ENCODE measurements at regions of chr4 and their contacts with region 1.

Region 1: DNA sequence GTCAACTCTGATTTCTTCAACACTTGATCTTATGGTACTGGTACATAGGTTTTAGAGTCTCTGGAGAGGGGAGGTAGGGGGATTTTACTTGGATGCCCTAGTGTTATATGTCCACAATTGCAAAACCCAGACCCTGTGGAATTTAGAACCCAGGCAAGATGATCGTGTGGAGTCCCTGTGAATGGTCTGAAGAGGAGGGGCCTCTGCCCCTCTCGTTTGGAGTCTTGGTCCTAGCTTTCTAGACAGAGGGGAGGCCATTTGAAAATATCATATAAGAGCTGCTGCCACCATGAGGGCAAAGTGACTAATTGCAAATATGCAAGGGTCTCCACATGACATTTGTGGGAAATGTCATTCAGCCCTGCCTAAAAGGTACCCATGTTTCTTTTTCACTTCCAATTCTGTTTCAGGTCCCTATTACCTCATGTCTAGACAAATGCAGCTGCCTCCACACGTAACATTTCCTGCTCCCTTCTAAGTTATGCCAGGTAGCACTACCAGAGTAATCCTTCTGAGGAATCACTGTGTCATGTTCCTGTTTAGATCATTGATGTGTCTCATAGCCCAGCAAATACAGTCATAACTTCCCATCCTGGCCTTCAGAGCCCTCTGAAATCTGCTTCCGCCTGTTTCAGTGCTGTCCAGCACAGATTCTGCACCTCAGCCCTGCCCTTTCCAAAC is 126.8 kb downstream of the KLHL8 start:
- DNase-seq: peak; percentile 65

Region 2: GRCh38 chr4:86921608-86922252 is 171.9 kb before region 1 on chr4:
- CTCF ChIA-PET with region 1: interaction called, 31 read pairs
- POLR2A ChIA-PET with region 1: interaction called, 3 read pairs
- DNase-seq: no peak

Region 3: DNA sequence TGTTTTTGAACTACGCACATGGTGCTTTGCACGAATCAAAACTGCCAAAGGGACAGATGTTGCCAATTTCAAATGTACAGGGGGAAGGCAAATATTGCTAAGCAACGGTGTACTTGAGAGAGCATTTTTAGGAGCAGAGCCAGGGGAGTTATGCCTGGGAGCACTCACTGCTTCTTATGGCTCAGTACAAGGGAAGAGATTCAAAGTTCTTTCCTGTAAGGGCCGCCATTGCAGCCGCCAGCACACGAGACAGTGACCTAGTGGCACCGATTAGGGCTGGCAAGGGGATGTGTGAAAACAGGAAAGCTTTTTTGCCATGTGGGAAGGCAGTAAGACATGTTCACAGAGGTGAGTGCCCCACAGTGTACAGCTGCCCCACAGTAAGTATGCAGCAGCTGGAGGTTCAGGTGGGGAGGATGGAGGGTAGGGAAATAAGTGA is 25.0 kb before region 1 on chr4:
- CTCF ChIA-PET with region 1: no interaction called
- POLR2A ChIA-PET with region 1: no interaction called
- DNase-seq: no peak

Region 4: DNA sequence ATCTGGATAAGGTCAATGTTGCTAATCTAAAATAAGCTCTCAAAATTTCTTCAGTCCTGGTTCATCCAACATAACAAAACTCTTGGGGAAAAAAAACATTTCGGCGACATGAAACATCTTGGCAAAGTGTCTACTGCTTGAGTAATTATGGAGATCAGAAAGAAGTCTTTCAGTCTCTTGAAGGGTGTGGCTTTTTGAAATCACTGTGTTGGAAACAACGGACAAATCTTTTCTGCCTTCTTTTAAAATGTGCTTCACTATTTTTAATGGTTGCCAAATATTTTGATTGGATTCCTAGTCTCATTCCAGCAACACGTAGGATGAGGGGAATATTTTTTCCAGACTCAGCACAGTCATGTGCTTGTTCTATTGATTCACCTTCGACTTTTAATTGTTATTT is 11.8 kb before region 1 on chr4:
- CTCF ChIA-PET with region 1: no interaction called
- POLR2A ChIA-PET with region 1: no interaction called
- DNase-seq: no peak